ENCODE measurements at regions of chr20 and their contacts with region 1.

Region 1: GRCh38 chr20:58236612-58237330 is 8.3 kb upstream of the ANKRD60 start:
- DNase-seq: peak; percentile 77 to 84
- ATAC-seq: peak; percentile 89 to 94 (median 90)
- H3K4me3 ChIP-seq: peak overlapping the region; percentile 69
- H3K27ac ChIP-seq: no peak overlapping the region
- H3K4me1 ChIP-seq: no peaks in the 10 kb centered on the region
- H3K27me3 ChIP-seq: no peaks in the 10 kb centered on the region
- CTCF ChIP-seq: peak; percentile 97

Region 2: DNA sequence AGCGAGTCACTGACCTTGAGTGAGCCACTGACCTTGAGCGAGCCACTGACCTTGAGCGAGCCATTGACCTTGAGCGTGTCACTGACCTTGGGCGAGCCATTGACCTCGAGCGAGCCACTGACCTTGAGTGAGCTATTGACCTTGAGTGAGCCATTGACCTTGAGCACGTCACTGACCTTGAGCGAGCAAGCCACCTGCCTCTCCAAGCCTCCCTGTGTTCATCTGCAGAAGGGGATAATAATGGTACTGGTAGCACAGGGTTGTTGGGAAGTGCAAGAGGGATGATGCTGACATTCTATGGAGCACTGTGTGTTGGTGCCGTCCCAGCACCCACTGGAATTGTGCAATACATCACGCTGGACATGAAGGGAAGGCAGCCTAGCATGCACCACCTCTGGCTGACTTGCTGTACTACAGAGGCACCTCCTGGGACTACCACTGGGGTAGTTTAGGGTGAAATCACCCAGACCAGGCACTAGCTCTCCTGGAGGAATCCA is 772.0 kb before region 1 on chr20:
- intact Hi-C with region 1: no loop called
- DNase-seq: peak; percentile 30 to 61
- ATAC-seq: peak; percentile 11 to 46 (median 19)
- H3K4me3 ChIP-seq: no peak overlapping the region
- H3K27ac ChIP-seq: no peak overlapping the region
- H3K4me1 ChIP-seq: peaks cover 6% of the 10 kb centered on the region
- H3K27me3 ChIP-seq: no peaks in the 10 kb centered on the region
- CTCF ChIP-seq: peak; percentile 23

Region 3: DNA sequence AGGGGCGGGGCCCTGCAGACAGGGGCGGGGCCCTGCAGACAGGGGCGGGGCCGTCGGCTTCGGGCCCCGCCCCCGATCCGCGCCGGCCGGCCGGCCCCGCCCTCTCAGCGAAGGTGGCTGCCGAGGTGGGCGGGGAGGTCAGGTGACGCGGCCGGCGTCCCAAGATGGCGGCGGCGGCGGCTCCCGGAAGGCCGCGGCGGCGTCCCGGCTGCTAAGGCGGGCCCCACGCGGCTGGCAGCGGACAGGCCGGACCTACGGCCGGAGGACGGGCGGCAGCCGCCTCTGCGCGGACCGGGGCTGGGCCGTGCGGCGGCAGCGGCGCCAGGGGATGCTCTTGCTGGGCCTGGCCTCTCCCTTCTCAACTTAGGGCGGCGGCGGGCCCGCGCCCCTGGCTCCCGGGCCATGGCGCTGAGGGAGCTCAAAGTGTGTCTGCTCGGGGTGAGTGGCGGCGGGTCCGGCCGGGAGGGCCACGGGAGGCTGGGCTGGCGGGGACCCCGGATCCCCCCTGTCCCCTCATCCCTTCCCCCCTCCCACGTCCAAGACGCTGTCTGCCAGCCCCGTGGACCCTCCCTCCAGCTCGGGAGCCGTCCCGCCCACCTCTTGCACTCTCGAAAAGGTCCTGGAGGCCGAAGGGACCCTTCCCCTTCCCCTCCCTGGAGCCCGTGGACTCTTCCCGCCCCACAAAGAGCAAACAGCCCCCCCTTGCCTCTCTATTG is 73.0 kb after region 1 on chr20 and contains the start of gene RAB22A:
- intact Hi-C with region 1: loop called in 1 of 2 experiments (anchors 5 kb)
- DNase-seq: peak; percentile 84 to 92
- ATAC-seq: peak; percentile 93 to 99 (median 96)
- H3K4me3 ChIP-seq: peak within 1 kb of the TSS; percentile 100
- H3K27ac ChIP-seq: peak within 1 kb of the TSS; percentile 93
- H3K4me1 ChIP-seq: peaks cover 16% of the 10 kb centered on the region
- H3K27me3 ChIP-seq: no peaks in the 10 kb centered on the region
- CTCF ChIP-seq: no peak
- total RNA-seq, gene RAB22A: 7.1 to 8.5 (median 8.1) TPM

Region 4: DNA sequence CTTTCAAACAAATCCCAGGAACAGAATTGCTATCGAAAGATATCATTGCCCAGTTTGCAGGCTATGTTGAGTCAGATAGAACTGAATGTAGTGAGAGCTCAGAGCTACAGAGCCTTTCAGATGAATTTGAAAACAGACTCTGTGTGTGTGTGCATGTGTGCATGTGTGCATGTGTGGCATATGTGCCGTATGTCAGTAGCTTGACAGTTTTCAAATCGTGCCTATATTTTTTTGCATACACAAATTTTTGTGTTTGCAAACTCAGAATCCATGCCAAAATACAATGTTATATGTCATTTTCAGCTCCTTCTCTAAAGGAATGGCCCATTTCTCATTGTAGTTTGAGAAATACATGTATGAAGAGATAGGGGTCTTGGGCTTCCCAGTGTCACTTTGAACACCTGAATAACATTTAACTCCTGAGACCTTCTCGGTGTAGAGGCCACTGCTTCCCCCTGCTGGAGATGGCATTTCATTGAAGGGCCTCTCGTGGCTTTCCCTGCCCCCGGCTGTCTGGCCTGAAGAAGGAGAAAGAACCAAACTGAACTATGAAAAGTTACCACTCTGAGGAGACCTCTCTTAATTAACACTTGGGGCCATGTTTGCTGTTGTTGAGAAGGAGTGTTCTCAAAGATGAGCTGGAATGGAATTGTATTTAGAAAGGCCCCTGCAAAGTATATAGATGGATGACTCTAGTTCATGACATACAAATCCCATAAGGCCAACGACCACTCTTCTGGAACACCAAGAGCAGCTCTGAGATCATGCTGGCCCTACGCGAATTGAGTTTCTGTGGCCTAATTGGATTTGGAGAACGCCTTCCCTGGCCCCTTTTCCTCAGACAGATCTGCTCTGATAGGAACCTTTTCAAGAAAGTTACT is 211.0 kb after region 1 on chr20:
- intact Hi-C with region 1: loop called (anchors 2 to 5 kb)
- DNase-seq: no peak
- ATAC-seq: peak; percentile 74 to 89 (median 80)
- H3K4me3 ChIP-seq: no peak overlapping the region
- H3K27ac ChIP-seq: no peak overlapping the region
- H3K4me1 ChIP-seq: no peaks in the 10 kb centered on the region
- H3K27me3 ChIP-seq: no peaks in the 10 kb centered on the region
- CTCF ChIP-seq: peak; percentile 75

Region 5: DNA sequence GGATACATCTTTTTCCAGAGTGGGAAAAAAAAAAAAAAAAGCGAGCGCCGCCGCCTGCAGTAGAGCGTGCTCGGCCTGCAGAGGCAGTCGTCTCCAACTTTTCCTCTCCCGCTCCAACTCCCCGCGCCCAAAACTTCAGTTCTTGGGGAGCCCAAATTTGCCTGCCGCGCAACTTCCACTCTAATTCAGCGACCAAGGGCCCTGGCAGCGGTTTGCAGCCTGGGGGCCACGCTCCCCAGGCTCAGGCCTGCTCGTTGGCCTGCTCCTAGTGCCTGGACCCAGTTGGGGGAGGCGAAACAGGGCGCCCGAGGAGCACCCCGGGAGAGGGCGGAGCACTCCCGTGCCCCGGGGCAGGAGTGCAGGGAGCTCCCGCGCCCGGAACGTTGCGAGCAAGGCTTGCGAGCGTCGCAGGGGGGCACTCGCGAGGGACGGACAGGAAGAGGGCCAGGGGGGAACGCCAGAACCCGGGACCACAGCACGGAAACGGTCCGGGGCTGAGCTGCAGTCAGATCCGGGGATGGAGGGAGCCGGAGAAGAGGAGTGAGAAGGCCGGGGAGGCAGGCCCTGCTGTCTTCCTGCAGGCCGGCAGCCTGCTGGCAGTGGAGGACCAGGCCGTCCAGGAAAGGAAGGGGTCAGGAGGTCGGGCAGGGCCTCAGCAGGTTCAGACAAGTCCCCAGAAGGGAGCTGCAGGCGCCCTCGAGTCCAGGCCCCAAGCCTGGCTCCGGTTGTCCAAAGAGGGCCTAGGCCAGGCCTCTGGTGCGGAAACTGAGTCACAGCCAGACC is 414.2 kb after region 1 on chr20 and contains the start of gene STX16:
- intact Hi-C with region 1: loop called (anchors 2 to 5 kb)
- DNase-seq: peak; percentile 90 to 95
- ATAC-seq: peak; percentile 96 to 98 (median 97)
- H3K4me3 ChIP-seq: peak within 1 kb of the TSS; percentile 73
- H3K27ac ChIP-seq: peak within 1 kb of the TSS; percentile 93
- H3K4me1 ChIP-seq: peaks cover 49% of the 10 kb centered on the region
- H3K27me3 ChIP-seq: no peaks in the 10 kb centered on the region
- CTCF ChIP-seq: peak; percentile 49
- total RNA-seq, gene STX16: 17.9 to 26.3 (median 21.1) TPM

Region 6: GRCh38 chr20:58839474-58839874 is 602.7 kb after region 1 on chr20:
- intact Hi-C with region 1: loop called in 1 of 2 experiments (anchors 10 kb)
- DNase-seq: peak in 1 of 2 donors; percentile 68
- ATAC-seq: peak; percentile 64 to 92 (median 76)
- H3K4me3 ChIP-seq: peak overlapping the region; percentile 52
- H3K27ac ChIP-seq: no peak overlapping the region
- H3K4me1 ChIP-seq: no peaks in the 10 kb centered on the region
- H3K27me3 ChIP-seq: peaks cover 0 to 34% (median 5%) of the 10 kb centered on the region in 3 donors
- CTCF ChIP-seq: peak; percentile 42

Measured in psoas muscle (tissue), 8 donors.